Sciatic nerve (tissue), 2 donors: ENCODE measurements at regions of chr12 and their contacts with region 1.

Region 1: DNA sequence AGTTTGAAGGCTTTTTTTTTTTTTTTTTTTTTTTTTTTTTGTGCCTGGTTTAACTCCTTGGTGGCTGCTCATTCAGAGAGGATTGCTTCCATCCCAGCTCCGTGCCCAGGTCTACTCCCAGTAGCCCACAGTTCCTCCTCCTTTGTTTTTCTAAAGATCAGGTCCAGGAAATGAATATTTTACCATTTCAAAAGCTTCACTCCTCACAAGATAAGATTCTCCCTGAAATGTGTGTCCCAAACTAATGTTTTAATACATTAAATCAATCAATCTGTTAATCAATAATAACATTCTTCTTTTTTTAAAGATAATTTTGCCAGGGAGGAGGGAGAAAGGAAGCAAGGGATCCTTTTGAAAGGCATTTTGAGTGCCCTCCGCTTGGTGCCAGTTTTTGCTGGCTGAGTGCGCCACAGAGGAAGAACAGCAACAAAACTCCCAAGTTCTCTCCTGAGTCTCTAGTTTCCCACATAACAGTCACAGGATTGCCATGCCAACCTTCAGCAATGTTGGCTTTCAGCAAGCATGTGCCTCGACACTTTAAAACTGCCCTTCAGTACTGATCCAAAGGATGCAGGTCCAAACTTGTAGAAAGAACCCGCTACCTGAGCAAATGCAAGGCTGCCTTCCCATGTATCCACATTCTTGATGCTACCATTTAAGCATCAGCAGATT is 99.2 kb downstream of the RMST start:
- DNase-seq: no peak
- ATAC-seq: no peak

Region 2: DNA sequence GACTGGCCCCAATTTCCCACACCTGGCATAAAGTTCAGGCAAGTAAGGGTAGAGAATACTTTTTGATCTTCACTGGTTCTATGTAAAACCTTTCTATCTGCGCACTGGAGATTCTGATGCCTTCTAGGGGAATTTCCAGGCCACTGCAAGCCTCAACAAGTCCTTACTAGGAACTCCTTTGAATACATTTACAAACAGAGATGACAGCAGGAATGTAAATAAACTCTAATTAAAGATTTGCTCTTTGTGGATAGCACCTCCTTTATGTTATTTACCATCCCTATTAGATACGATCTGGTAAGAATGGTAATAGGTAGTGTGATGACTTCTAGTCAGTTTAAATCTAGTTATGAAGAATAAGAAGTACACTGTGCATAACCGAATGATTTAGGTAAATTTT is 1840.4 kb before region 1 on chr12:
- intact Hi-C with region 1: loop called (anchors 5 kb)
- DNase-seq: no peak
- ATAC-seq: no peak

Region 3: GRCh38 chr12:97616946-97617345 is 55.2 kb after region 1 on chr12:
- intact Hi-C with region 1: no loop called
- DNase-seq: no peak
- ATAC-seq: peak; percentile 67